ENCODE measurements at regions of chr22 and their contacts with region 1.

Region 1: DNA sequence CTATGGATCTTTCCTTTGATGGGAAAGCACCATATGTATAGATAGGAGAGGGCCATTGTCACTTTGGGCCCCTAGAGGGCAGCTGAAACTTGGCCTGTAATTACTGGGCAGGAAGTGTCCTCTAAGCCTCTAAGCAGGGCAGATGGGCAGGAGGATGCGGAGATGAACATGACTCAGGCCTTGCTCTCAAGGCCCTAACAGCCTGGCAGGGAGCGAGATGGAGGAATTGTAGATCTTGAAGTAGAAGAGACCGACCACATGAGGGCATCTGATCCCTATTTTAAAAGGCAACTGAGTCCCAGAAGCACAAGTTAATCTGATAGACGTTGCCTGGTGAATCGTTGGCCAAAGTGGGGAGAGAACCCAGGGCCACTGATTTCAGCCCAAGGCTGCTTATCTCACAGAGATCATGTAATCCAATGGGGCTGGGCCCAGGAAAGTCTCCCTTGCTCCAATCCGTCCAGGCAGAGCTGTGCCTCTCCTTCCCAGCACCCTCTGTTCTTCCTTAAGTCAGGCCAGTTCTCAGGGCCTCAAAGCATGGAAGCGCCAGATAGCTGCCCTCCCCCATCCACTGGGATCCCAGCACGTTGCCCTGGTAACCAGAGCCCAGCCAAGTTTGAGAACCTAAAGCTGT is 2.5 kb upstream of the SEPTIN3 start:
- DNase-seq: peak in 7 of 14 experiments; percentile 25 to 80 (median 49)
- ATAC-seq: peak; percentile 61
- H3K4me3 ChIP-seq: no peak overlapping the region
- H3K4me3 Mint-ChIP-seq: no peak overlapping the region
- H3K27ac ChIP-seq: no peak overlapping the region
- H3K27ac Mint-ChIP-seq: no peak overlapping the region
- H3K4me1 ChIP-seq: no peaks in the 10 kb centered on the region
- H3K4me1 Mint-ChIP-seq: no peaks in the 10 kb centered on the region
- H3K27me3 ChIP-seq: peaks cover under 1 to 8% of the 10 kb centered on the region in 2 experiments
- H3K27me3 Mint-ChIP-seq: peaks cover 6% of the 10 kb centered on the region
- CTCF ChIP-seq: peak; percentile 43

Region 2: GRCh38 chr22:42444077-42444904 is 477.6 kb after region 1 on chr22:
- CTCF ChIA-PET with region 1: interaction called, 3 read pairs
- POLR2A ChIA-PET with region 1: no interaction called
- intact Hi-C with region 1: loop called in 1 of 2 experiments (anchors 2 kb)
- DNase-seq: peak; percentile 63 to 92 (median 80)
- ATAC-seq: peak; percentile 95
- H3K4me3 ChIP-seq: peak overlapping the region; percentile 62
- H3K4me3 Mint-ChIP-seq: peak overlapping the region; percentile 88
- H3K27ac ChIP-seq: peak overlapping the region; percentile 73 to 78
- H3K27ac Mint-ChIP-seq: peak overlapping the region; percentile 96
- H3K4me1 ChIP-seq: peaks cover 24% of the 10 kb centered on the region
- H3K4me1 Mint-ChIP-seq: peaks cover 28% of the 10 kb centered on the region
- H3K27me3 ChIP-seq: no peaks in the 10 kb centered on the region
- H3K27me3 Mint-ChIP-seq: no peaks in the 10 kb centered on the region
- CTCF ChIP-seq: peak; percentile 63

Region 3: DNA sequence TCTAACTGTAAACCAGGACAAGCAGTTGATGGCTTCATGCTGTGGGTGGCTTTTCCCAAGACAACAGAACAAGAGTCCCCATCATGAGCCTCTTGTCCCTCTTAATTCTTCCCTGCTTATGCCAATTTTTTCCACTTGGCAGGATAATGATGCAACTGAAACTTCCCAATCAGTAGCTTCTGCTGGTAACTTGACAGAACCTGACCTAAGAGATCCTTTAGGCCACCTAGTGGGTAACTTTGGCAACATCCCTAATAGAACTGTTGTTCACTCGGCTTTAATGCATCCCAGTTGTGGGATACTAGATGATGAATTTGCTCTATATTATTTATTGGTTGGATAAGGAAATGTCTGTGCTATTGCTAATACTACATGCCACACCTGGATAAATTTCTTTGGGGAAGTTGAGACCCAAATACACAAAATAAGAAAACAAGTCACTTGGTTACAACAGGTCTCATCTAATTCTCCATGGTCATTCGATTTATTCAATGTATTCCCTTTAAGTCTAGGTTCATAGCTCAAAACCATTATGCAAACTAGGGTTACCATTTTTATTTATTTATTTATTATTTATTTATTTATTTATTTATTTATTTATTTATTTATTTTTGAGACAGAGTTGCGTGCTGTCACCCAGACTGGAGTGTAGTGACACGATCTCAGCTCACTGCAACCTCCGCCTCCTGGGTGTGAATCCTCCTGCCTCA is 506.9 kb after region 1 on chr22:
- CTCF ChIA-PET with region 1: no interaction called
- POLR2A ChIA-PET with region 1: no interaction called
- intact Hi-C with region 1: loop called (anchors 1 to 10 kb)
- DNase-seq: peak in 4 of 14 experiments; percentile 15 to 63 (median 50)
- ATAC-seq: peak; percentile 63
- H3K4me3 ChIP-seq: no peak overlapping the region
- H3K4me3 Mint-ChIP-seq: no peak overlapping the region
- H3K27ac ChIP-seq: no peak overlapping the region
- H3K27ac Mint-ChIP-seq: no peak overlapping the region
- H3K4me1 ChIP-seq: peaks cover 8% of the 10 kb centered on the region
- H3K4me1 Mint-ChIP-seq: peaks cover 5% of the 10 kb centered on the region
- H3K27me3 ChIP-seq: no peaks in the 10 kb centered on the region
- H3K27me3 Mint-ChIP-seq: no peaks in the 10 kb centered on the region
- CTCF ChIP-seq: peak; percentile 75

Measured in CD4-positive, alpha-beta T cell (primary cell).